ENCODE measurements at regions of chr12 and their contacts with region 1.

Region 1: GRCh38 chr12:66087365-66087943 is 43.1 kb downstream of the LLPH start:
- DNase-seq: peak; percentile 14 to 63 (median 46)
- ATAC-seq: no peak
- H3K4me3 ChIP-seq: no peak overlapping the region
- H3K4me3 Mint-ChIP-seq: no peak overlapping the region
- H3K27ac ChIP-seq: no peak overlapping the region
- H3K27ac Mint-ChIP-seq: no peak overlapping the region
- H3K4me1 ChIP-seq: no peaks in the 10 kb centered on the region
- H3K4me1 Mint-ChIP-seq: no peaks in the 10 kb centered on the region
- H3K27me3 ChIP-seq: no peaks in the 10 kb centered on the region
- H3K27me3 Mint-ChIP-seq: peaks cover 29% of the 10 kb centered on the region
- CTCF ChIP-seq: peak; percentile 53

Region 2: DNA sequence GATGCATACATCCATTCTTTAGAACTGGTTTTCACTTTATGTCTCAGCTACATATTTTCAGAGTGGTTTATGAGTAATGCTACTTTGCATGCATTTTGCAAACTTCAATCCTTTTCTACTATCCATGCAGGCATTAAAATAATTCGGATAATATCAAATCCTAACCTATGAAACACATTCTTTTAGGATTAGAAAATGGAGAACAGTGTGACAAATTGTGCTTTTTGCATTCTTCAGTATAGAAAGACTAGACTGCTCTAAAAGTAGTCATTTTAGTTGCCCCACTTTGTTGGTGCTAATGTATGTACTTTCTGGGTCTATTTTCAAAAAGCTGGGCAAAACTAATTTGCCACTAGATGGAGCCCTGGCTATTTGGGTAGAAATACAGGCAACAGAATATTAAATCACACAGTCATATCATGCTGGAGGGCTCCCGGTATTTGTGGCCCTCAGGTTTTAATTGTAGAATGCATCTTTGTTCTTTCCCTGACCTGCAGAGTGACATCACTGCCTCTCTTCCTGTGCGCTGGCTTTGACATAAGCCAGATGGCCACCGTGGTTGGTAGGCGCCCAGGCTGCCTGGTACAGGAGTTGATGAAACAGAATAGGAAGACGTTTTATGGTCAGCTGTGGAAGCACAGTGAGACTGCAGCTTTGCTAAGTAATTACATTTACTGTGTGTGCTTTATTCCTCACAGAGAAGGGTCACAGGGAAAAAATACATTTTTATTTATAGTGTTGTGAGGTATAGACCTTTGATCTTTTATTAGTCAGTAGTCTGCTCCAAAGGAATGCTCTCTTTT is 780.9 kb before region 1 on chr12:
- CTCF ChIA-PET with region 1: no interaction called
- POLR2A ChIA-PET with region 1: no interaction called
- intact Hi-C with region 1: loop called in 1 of 2 experiments (anchors 10 kb)
- DNase-seq: peak in 2 of 9 experiments; percentile 2
- ATAC-seq: no peak
- H3K4me3 ChIP-seq: no peak overlapping the region
- H3K4me3 Mint-ChIP-seq: no peak overlapping the region
- H3K27ac ChIP-seq: no peak overlapping the region
- H3K27ac Mint-ChIP-seq: no peak overlapping the region
- H3K4me1 ChIP-seq: no peaks in the 10 kb centered on the region
- H3K4me1 Mint-ChIP-seq: peaks cover 8% of the 10 kb centered on the region
- H3K27me3 ChIP-seq: no peaks in the 10 kb centered on the region
- H3K27me3 Mint-ChIP-seq: peaks cover 4% of the 10 kb centered on the region
- CTCF ChIP-seq: no peak

Region 3: GRCh38 chr12:66279123-66279712 is 191.8 kb after region 1 on chr12:
- CTCF ChIA-PET with region 1: no interaction called
- POLR2A ChIA-PET with region 1: no interaction called
- intact Hi-C with region 1: no loop called
- DNase-seq: peak in 8 of 9 experiments; percentile 18 to 73 (median 45)
- ATAC-seq: peak; percentile 70
- H3K4me3 ChIP-seq: no peak overlapping the region
- H3K4me3 Mint-ChIP-seq: peak overlapping the region; percentile 12
- H3K27ac ChIP-seq: no peak overlapping the region
- H3K27ac Mint-ChIP-seq: no peak overlapping the region
- H3K4me1 ChIP-seq: peaks cover 24% of the 10 kb centered on the region
- H3K4me1 Mint-ChIP-seq: peaks cover 47% of the 10 kb centered on the region
- H3K27me3 ChIP-seq: no peaks in the 10 kb centered on the region
- H3K27me3 Mint-ChIP-seq: no peaks in the 10 kb centered on the region
- CTCF ChIP-seq: peak; percentile 63